CD14-positive monocyte (primary cell): ENCODE measurements at regions of chr21 and their contacts with region 1.

Region 1: GRCh38 chr21:20030390-20030789 is 967.8 kb upstream of the NCAM2 start:
- DNase-seq: no peak
- H3K4me3 ChIP-seq: no peak overlapping the region
- H3K4me3 Mint-ChIP-seq: no peak overlapping the region
- H3K27ac ChIP-seq: no peak overlapping the region
- H3K27ac Mint-ChIP-seq: no peak overlapping the region
- H3K4me1 ChIP-seq: no peaks in the 10 kb centered on the region
- H3K4me1 Mint-ChIP-seq: no peaks in the 10 kb centered on the region
- H3K27me3 ChIP-seq: no peaks in the 10 kb centered on the region
- H3K27me3 Mint-ChIP-seq: peaks cover 0 to 3% (median 0%) of the 10 kb centered on the region in 3 donors
- CTCF ChIP-seq: no peak

Region 2: GRCh38 chr21:20086508-20086907 is 56.1 kb after region 1 on chr21:
- intact Hi-C with region 1: loop called in 1 of 2 experiments (anchors 10 kb)
- DNase-seq: no peak
- H3K4me3 ChIP-seq: no peak overlapping the region
- H3K4me3 Mint-ChIP-seq: no peak overlapping the region
- H3K27ac ChIP-seq: no peak overlapping the region
- H3K27ac Mint-ChIP-seq: no peak overlapping the region
- H3K4me1 ChIP-seq: no peaks in the 10 kb centered on the region
- H3K4me1 Mint-ChIP-seq: no peaks in the 10 kb centered on the region
- H3K27me3 ChIP-seq: no peaks in the 10 kb centered on the region
- H3K27me3 Mint-ChIP-seq: no peaks in the 10 kb centered on the region
- CTCF ChIP-seq: no peak